ENCODE measurements at regions of chr19 and their contacts with region 1.

Region 1: GRCh38 chr19:44954824-44955586 is at the start of gene CLPTM1:
- DNase-seq: peak; percentile 82
- H3K4me3 ChIP-seq: peak within 1 kb of the TSS; percentile 72 to 100 (median 100)
- H3K27ac ChIP-seq: peak within 1 kb of the TSS; percentile 89 to 99 (median 98)
- H3K4me1 ChIP-seq: peaks cover 31 to 60% (median 32%) of the 10 kb centered on the region in 3 donors
- H3K27me3 ChIP-seq: no peaks in the 10 kb centered on the region
- CTCF ChIP-seq: peak in 4 of 6 experiments; percentile 4 to 41 (median 20)
- POLR2A ChIP-seq: peak in 3 of 4 donors; percentile 44 to 77 (median 48)
- total RNA-seq, gene CLPTM1: 44.2 to 76.9 (median 56.3) TPM

Region 2: GRCh38 chr19:44903602-44904425 is 51.2 kb before region 1 on chr19:
- intact Hi-C with region 1: loop called (anchors 5 kb)
- DNase-seq: no peak
- H3K4me3 ChIP-seq: no peak overlapping the region
- H3K27ac ChIP-seq: no peak overlapping the region
- H3K4me1 ChIP-seq: peaks cover 18 to 34% (median 18%) of the 10 kb centered on the region in 3 donors
- H3K27me3 ChIP-seq: peaks cover 0 to 34% (median 5%) of the 10 kb centered on the region in 4 donors
- CTCF ChIP-seq: peak; percentile 93 to 100 (median 98)
- POLR2A ChIP-seq: no peak